Breast epithelium (tissue), 4 donors: ENCODE measurements at regions of chr13 and their contacts with region 1.

Region 1: GRCh38 chr13:36673838-36674326 is at the start of gene SERTM1:
- DNase-seq: no peak
- H3K4me3 ChIP-seq: peak within 1 kb of the TSS; percentile 36 to 63 (median 49)
- H3K27ac ChIP-seq: no peak within 1 kb of the TSS
- H3K4me1 ChIP-seq: no peaks in the 10 kb centered on the region
- H3K27me3 ChIP-seq: peaks cover 0 to 33% of the 10 kb centered on the region in 2 donors
- CTCF ChIP-seq: no peak
- POLR2A ChIP-seq: no peak
- total RNA-seq, gene SERTM1: 0.16 to 7.6 TPM in 2 of 3 donors, not detected in the other

Region 2: DNA sequence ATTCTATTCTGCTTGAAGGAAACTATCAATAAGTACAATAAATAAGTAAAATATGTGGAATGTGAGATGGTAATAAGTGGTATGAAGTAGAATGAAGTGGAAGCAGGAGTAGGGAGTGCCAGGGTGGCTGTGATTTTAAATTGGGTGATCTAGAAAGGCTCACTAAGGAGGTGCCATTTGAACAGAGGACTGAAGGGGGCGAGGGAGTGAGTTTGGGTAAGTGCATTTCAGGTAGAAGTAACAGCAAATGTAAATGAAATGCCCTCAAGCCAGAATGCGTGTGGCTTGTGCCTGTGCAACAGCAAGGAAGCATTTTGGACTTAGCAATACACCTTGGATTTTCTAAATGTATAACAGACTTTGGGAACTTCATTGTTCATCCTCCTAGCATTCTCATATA is 164.5 kb before region 1 on chr13:
- intact Hi-C with region 1: no loop called
- DNase-seq: no peak
- H3K4me3 ChIP-seq: no peak overlapping the region
- H3K27ac ChIP-seq: no peak overlapping the region
- H3K4me1 ChIP-seq: no peaks in the 10 kb centered on the region
- H3K27me3 ChIP-seq: no peaks in the 10 kb centered on the region
- CTCF ChIP-seq: no peak
- POLR2A ChIP-seq: no peak

Region 3: GRCh38 chr13:36685927-36686326 is 12.0 kb after region 1 on chr13:
- intact Hi-C with region 1: loop called (anchors 1 kb)
- DNase-seq: no peak
- H3K4me3 ChIP-seq: no peak overlapping the region
- H3K27ac ChIP-seq: no peak overlapping the region
- H3K4me1 ChIP-seq: no peaks in the 10 kb centered on the region
- H3K27me3 ChIP-seq: no peaks in the 10 kb centered on the region
- CTCF ChIP-seq: no peak
- POLR2A ChIP-seq: no peak

Region 4: GRCh38 chr13:36915106-36915505 is 241.2 kb after region 1 on chr13:
- intact Hi-C with region 1: no loop called
- DNase-seq: no peak
- H3K4me3 ChIP-seq: no peak overlapping the region
- H3K27ac ChIP-seq: no peak overlapping the region
- H3K4me1 ChIP-seq: no peaks in the 10 kb centered on the region
- H3K27me3 ChIP-seq: no peaks in the 10 kb centered on the region
- CTCF ChIP-seq: no peak
- POLR2A ChIP-seq: no peak